ENCODE measurements at regions of chr15 and their contacts with region 1.

Region 1: DNA sequence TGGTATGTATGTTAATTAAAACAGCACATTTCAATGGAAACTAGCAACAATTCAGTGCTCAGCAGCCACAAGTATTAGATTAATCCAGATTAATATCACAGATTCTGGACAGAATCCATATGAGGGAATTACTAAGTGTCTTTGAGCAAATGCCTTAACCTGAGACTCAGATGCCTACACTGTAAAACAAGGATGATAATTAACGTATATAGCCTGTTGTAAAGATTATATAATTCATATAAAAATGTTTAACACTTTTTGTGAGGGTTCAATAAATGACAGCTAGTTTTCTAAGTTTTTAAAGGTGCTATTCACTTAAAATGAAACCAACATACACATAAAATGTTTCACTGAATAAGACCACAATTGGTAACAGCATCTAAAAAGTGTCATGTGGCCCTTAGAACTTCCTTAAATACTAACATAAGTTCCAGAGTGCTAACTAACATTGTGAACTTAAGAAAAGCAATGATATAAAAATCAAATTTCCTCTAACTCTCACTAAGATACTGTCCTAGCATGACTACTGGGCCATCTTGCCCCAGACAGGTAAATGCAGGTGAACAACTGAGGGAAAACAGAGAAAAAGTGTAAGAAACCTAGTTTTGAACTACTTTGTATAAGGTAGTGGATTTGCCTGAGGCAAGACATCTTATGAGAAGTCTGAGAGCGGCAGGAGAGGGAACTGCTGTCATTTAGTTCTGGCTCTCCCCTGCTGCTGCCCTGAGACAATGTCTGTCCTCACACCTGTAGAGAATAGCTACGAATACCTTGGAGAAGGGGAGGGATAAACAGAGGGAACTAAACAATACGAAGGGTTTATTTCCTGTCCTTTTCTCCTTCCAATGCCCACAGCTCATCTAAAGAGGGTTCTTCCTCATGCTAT is 151.3 kb downstream of the ADAM10 start:
- DNase-seq: no peak
- H3K4me3 Mint-ChIP-seq: no peak overlapping the region
- H3K27ac Mint-ChIP-seq: no peak overlapping the region
- H3K4me1 Mint-ChIP-seq: peaks cover 38% of the 10 kb centered on the region
- H3K27me3 Mint-ChIP-seq: no peaks in the 10 kb centered on the region

Region 2: GRCh38 chr15:58704155-58704865 is 106.1 kb after region 1 on chr15:
- intact Hi-C with region 1: loop called (anchors 10 kb)
- DNase-seq: no peak
- H3K4me3 Mint-ChIP-seq: no peak overlapping the region
- H3K27ac Mint-ChIP-seq: no peak overlapping the region
- H3K4me1 Mint-ChIP-seq: peaks cover 71% of the 10 kb centered on the region
- H3K27me3 Mint-ChIP-seq: no peaks in the 10 kb centered on the region